ENCODE measurements at regions of chr7 and their contacts with region 1.

Region 1: GRCh38 chr7:82164813-82165212 is 278.8 kb downstream of the CACNA2D1 start:
- DNase-seq: no peak
- ATAC-seq: peak; percentile 80 to 82

Region 2: GRCh38 chr7:82049891-82050533 is 114.8 kb before region 1 on chr7:
- intact Hi-C with region 1: loop called in 1 of 2 experiments (anchors 10 kb)
- DNase-seq: no peak
- ATAC-seq: peak; percentile 44 to 98

Region 3: DNA sequence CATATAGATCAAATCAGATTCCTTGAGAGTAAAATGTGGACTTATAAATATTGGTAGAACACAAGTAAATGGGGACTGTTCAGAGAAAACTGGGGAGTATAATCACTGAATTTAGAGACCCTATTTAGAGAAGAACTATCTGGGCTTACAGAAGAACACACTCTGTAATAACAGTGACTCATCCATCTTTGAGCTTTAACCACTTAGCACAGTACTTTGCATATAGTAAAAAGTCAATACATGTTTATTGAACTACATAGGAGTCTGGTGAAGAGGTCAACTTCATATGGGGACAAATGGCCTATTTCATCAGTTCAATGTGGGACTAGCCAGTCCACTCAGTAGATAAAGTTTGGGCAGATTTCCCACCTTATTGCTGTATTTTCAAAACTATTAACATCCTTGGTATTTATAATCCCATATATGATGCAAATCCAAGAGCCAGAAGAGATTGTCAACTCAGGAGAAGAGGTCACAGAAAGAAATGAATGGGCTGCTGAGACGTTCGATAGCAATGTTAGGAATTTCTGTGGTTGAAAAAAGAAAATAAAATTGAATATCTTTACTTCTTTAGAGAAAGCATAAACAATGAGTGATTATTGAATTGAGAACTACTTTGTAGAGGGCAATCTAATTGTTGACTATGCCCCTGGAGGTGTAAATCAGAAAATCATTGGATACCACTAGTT is 398.0 kb after region 1 on chr7:
- intact Hi-C with region 1: loop called in 1 of 2 experiments (anchors 10 kb)
- DNase-seq: no peak
- ATAC-seq: no peak

Region 4: DNA sequence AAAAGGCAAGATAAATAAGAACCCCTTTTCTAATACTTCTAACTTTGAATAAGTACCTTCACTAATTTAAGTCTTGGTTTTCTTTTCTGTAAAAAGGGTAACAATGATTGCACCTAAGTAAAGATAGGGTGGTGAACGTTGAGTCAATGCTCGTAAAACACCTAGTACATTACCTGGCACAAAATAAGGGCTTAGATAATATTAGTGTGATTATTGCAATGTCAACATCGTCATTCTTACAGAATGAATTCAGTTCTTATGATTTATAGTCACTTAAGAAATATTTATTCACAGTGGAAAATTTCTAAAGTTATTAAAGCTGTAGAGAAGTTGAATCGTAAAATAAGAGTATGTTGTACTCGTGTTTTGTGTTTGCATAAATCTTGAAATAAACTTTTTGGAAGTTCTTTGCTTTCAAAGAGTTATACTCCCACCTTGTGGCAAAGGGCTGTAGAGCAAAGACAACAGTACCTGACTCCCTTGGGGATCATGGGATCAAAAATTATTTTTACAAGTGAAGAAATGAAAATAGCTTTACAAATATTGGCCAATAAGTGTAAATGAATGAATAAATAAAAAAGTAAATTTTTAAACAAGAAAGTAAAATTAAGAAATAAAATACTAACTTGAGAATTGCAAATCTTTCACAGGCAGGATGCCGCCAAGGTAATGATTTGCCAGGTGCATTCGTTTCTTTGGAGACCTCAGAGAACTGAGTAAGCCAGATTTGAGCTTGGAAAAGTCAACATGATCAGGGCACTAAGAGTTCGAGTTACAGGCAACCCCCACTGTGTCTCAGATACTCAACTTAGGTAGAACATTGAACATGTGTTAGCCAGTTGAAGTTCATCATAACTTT is 564.6 kb after region 1 on chr7:
- intact Hi-C with region 1: loop called in 1 of 2 experiments (anchors 10 kb)
- DNase-seq: no peak
- ATAC-seq: no peak